Activated CD8-positive, alpha-beta T cell treated with anti-CD3 and anti-CD28 coated beads for 36 hours (primary cell): ENCODE measurements at regions of chr13 and their contacts with region 1.

Region 1: DNA sequence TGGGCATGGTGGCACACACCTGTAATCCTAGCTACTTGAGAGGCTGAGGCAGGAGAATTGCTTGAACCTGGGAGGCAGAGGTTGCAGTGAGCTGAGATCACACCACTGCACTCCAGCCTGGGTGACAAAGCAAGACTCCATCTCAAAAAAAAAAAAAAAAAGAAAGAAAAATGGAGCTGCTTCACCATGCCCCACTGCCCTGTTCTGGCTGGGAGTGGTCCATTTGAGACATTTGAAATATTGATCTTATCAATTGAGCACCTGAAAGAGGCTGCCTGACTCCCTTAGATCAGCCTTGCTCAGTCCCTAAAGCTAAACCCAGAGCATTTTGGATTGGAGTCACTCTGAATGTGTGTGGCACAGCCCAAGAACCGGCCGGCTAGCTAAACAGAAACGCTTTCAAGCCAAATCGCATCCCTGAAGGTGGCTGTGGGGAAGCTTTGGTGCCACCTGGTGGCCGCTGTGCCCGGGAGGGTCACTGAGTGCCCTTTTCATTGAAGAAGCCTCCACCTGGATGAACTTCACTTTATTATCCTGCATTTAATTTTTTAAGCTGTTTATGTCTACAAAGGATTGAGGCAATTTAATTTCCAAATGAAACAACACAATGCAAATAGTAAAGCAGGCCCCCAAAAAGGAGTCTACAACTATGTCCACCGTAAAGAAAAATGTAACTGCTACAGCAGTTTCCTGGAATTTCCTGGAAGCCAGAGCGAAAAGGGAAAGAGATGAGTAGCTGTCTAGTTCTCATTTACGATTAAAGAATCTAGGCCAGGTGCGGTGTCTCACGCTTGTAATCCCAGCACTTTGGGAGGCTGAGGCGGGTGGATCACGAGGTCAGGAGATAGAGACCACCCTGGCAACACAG is 53.1 kb upstream of the SERPINE3 start:
- DNase-seq: peak; percentile 86
- ATAC-seq: peak; percentile 89
- H3K4me3 Mint-ChIP-seq: no peak overlapping the region
- H3K27ac Mint-ChIP-seq: no peak overlapping the region
- H3K4me1 Mint-ChIP-seq: peaks cover 6% of the 10 kb centered on the region
- H3K27me3 Mint-ChIP-seq: no peaks in the 10 kb centered on the region
- CTCF ChIP-seq: peak; percentile 88

Region 2: GRCh38 chr13:51148952-51149573 is 137.3 kb before region 1 on chr13:
- CTCF ChIA-PET with region 1: interaction called, 17 read pairs
- POLR2A ChIA-PET with region 1: no interaction called
- intact Hi-C with region 1: no loop called
- DNase-seq: peak; percentile 22
- ATAC-seq: no peak
- H3K4me3 Mint-ChIP-seq: no peak overlapping the region
- H3K27ac Mint-ChIP-seq: no peak overlapping the region
- H3K4me1 Mint-ChIP-seq: peaks cover 2% of the 10 kb centered on the region
- H3K27me3 Mint-ChIP-seq: peaks cover 20% of the 10 kb centered on the region
- CTCF ChIP-seq: peak; percentile 18

Region 3: GRCh38 chr13:51222037-51222685 is 64.2 kb before region 1 on chr13 and contains the start of gene FAM124A:
- CTCF ChIA-PET with region 1: interaction called, 21 read pairs
- POLR2A ChIA-PET with region 1: no interaction called
- intact Hi-C with region 1: no loop called
- DNase-seq: peak; percentile 43
- ATAC-seq: peak; percentile 93
- H3K4me3 Mint-ChIP-seq: peak within 1 kb of the TSS; percentile 68
- H3K27ac Mint-ChIP-seq: no peak within 1 kb of the TSS
- H3K4me1 Mint-ChIP-seq: no peaks in the 10 kb centered on the region
- H3K27me3 Mint-ChIP-seq: peaks cover 42% of the 10 kb centered on the region
- CTCF ChIP-seq: peak; percentile 16
- total RNA-seq, gene FAM124A: 0.07 to 0.25 TPM

Region 4: DNA sequence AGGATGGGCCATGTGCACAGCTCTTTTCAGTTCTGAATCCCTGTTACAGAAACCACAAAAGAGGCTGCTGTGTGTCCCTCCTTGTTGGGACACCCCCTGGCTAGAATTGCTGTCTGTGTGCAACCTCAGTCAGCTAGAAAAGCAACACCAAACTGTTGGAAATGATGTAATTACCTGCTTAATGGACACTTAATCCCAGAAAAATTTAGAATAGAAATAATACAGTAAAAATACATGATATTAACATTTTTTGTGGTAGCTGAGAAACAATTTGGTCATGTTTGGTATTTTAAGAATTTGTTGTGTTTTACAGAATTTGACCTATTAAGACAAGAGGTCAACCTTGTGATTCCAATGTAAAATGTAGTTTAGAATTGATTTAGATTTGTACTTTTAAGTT is 17.3 kb before region 1 on chr13:
- CTCF ChIA-PET with region 1: interaction called, 34 read pairs
- POLR2A ChIA-PET with region 1: no interaction called
- intact Hi-C with region 1: no loop called
- DNase-seq: no peak
- ATAC-seq: no peak
- H3K4me3 Mint-ChIP-seq: no peak overlapping the region
- H3K27ac Mint-ChIP-seq: no peak overlapping the region
- H3K4me1 Mint-ChIP-seq: no peaks in the 10 kb centered on the region
- H3K27me3 Mint-ChIP-seq: no peaks in the 10 kb centered on the region
- CTCF ChIP-seq: no peak

Region 5: GRCh38 chr13:51303063-51303552 is 16.7 kb after region 1 on chr13:
- CTCF ChIA-PET with region 1: interaction called, 55 read pairs
- POLR2A ChIA-PET with region 1: no interaction called
- intact Hi-C with region 1: no loop called
- DNase-seq: no peak
- ATAC-seq: no peak
- H3K4me3 Mint-ChIP-seq: no peak overlapping the region
- H3K27ac Mint-ChIP-seq: no peak overlapping the region
- H3K4me1 Mint-ChIP-seq: no peaks in the 10 kb centered on the region
- H3K27me3 Mint-ChIP-seq: no peaks in the 10 kb centered on the region
- CTCF ChIP-seq: no peak

Region 6: GRCh38 chr13:51323824-51324511 is 37.6 kb after region 1 on chr13:
- CTCF ChIA-PET with region 1: interaction called, 11 read pairs
- POLR2A ChIA-PET with region 1: no interaction called
- intact Hi-C with region 1: no loop called
- DNase-seq: no peak
- ATAC-seq: no peak
- H3K4me3 Mint-ChIP-seq: no peak overlapping the region
- H3K27ac Mint-ChIP-seq: no peak overlapping the region
- H3K4me1 Mint-ChIP-seq: no peaks in the 10 kb centered on the region
- H3K27me3 Mint-ChIP-seq: no peaks in the 10 kb centered on the region
- CTCF ChIP-seq: no peak

Region 7: GRCh38 chr13:52118595-52118994 is 832.2 kb after region 1 on chr13:
- CTCF ChIA-PET with region 1: no interaction called
- POLR2A ChIA-PET with region 1: no interaction called
- intact Hi-C with region 1: no loop called
- DNase-seq: no peak
- ATAC-seq: no peak
- H3K4me3 Mint-ChIP-seq: no peak overlapping the region
- H3K27ac Mint-ChIP-seq: no peak overlapping the region
- H3K4me1 Mint-ChIP-seq: no peaks in the 10 kb centered on the region
- H3K27me3 Mint-ChIP-seq: peaks cover 6% of the 10 kb centered on the region
- CTCF ChIP-seq: no peak